Dorsolateral prefrontal cortex (tissue), 120 donors: ENCODE measurements at regions of chr16 and their contacts with region 1.

Region 1: GRCh38 chr16:50806099-50807062 is 64.5 kb downstream of the CYLD start:
- DNase-seq: peak; percentile 80 to 93 (median 84)
- H3K4me3 ChIP-seq: peak overlapping the region in 56 of 59 donors; percentile 17 to 62 (median 47)
- H3K27ac ChIP-seq: peak overlapping the region; percentile 69 to 96 (median 92)
- H3K27me3 ChIP-seq: no peaks in the 10 kb centered on the region
- CTCF ChIP-seq: peak; percentile 81 to 100 (median 97)

Region 2: DNA sequence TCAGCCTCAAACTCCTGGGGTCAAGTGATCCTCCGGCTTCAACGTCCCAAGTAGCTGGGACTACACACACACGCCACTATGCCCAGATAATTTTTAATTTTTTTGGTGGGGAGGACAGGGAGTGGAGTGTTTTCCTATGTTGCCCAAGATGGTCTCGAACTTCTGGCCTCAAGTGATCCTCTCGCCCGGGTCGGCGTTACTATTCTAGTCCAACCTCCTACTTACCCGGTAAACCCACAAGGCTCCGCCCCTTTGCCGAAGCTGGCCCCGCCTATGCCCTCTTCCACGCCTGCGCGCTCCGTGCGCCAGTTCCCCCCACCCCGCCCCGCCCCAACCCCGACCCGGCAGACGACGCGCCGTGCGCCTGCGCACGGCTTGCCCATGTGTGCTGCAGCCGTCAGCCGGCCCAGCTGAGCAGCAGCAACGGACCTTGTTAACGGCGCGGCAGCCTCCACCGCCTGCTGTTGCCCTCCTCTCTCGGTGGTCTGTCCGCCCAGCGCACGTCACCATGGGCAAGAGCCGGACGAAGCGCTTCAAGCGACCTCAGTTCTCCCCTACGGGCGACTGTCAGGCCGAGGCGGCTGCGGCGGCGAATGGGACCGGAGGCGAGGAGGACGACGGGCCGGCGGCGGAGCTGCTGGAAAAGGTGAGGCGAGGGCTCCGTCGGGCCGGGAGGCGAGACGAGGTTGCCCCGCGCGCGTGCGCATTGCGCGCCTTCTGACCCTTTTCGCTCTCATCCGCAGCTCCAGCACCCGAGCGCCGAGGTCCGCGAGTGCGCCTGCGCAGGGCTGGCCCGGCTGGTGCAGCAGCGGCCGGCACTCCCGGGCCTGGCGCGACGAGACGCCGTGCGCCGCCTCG is 740.5 kb before region 1 on chr16 and contains the start of gene HEATR3:
- intact Hi-C with region 1: loop called in 1 of 2 experiments (anchors 5 kb)
- DNase-seq: peak; percentile 82 to 94 (median 90)
- H3K4me3 ChIP-seq: peak within 1 kb of the TSS; percentile 67 to 100 (median 97)
- H3K27ac ChIP-seq: peak within 1 kb of the TSS; percentile 68 to 100 (median 98)
- H3K27me3 ChIP-seq: no peaks in the 10 kb centered on the region
- CTCF ChIP-seq: peak in 26 of 56 donors; percentile 2 to 40 (median 16)
- total RNA-seq, gene HEATR3: 11.3 to 36.1 (median 20.5) TPM

Region 3: DNA sequence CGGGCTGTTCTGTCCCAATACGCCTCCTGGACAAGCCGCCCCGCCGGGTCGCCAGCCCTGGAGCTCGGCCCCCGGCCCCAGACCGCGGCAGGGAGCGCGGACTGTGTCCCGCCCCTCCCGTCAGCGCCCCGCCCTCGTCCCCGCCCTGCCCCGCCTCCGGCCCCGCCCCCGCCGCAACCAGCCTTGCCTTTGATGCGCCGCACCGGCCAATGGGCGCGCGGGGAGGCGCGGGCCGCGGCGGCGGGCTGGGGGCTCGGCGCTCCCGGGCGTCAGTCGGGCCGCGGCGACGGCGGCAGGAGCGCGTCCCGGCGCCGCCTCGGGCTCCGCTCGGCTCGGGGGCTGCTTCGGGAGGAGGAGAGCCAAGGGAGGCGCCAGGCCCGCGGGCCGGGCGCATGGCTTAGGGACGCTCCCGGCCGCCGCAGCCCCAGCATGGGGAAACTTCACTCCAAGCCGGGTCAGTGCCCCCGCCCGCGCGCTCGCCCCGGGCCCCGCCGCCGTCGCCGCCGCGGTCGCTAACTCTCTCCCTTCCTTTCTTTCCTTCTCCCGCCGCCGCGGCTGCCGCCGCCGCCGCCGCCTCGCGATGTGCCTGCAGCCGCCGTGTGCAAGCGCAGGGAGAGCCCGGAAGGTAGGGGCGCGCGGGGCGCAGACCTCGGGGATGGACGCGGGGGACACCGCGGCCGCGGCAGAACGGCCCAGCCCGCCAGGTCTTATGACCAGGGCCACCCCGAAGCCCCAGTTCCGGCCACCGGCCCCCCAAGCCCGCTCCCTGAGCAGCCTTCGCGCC is 258.1 kb before region 1 on chr16 and contains the start of gene NKD1:
- intact Hi-C with region 1: loop called in 1 of 2 experiments (anchors 10 kb)
- DNase-seq: peak in 9 of 10 donors; percentile 39 to 84 (median 67)
- H3K4me3 ChIP-seq: peak within 1 kb of the TSS; percentile 54 to 94 (median 80)
- H3K27ac ChIP-seq: peak within 1 kb of the TSS in 29 of 59 donors; percentile 14 to 83 (median 59)
- H3K27me3 ChIP-seq: peaks cover 0 to 14% (median 0%) of the 10 kb centered on the region in 45 donors
- CTCF ChIP-seq: peak in 1 of 56 donors; percentile 8
- total RNA-seq, gene NKD1: 3.8 to 25.7 (median 12.7) TPM

Region 4: GRCh38 chr16:50763211-50763610 is 43.2 kb before region 1 on chr16:
- intact Hi-C with region 1: no loop called
- DNase-seq: no peak
- H3K4me3 ChIP-seq: no peak overlapping the region
- H3K27ac ChIP-seq: peak overlapping the region in 7 of 59 donors; percentile 5 to 49 (median 39)
- H3K27me3 ChIP-seq: no peaks in the 10 kb centered on the region
- CTCF ChIP-seq: no peak

Region 5: DNA sequence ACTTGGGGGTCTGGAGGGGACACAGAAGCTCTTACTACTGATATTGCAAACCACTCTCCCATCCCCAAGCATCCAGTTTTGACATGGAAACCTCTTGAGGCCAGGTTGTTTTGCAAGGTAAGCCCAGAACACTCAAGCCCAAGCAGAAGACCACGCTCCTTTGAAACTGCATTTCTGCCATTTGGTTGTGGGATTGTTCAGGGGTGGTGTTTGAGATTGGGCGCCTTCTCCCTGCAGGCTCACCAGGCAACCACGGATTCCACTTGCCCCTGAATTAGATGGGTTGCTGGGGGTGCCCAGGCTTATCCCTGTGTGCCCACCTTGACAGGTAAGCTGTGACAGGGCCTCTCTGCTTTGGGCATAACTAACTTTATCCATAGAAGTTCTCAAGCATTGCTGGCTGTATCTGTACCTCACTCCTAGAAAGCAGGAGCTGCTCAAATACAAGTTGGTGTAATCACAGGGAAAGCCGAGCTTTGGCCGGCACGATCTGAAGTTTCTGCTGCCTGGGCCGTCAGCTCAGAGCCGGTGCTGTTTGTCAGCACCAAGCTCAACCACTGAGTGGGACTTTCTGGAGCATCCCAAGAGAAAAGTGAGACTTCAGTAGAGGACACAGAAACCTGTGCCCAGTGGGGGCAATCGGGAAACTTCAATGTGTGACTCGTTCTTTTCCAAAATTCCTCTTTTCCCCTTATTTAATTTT is 29.1 kb after region 1 on chr16:
- intact Hi-C with region 1: loop called in 1 of 2 experiments (anchors 1 kb)
- DNase-seq: peak in 3 of 10 donors; percentile 30 to 62 (median 50)
- H3K4me3 ChIP-seq: peak overlapping the region in 29 of 59 donors; percentile 1 to 48 (median 16)
- H3K27ac ChIP-seq: peak overlapping the region; percentile 76 to 100 (median 97)
- H3K27me3 ChIP-seq: peaks cover 0 to 6% (median 0%) of the 10 kb centered on the region in 45 donors
- CTCF ChIP-seq: peak in 2 of 56 donors; percentile 2 to 8